ENCODE measurements at regions of chr6 and their contacts with region 1.

Region 1: DNA sequence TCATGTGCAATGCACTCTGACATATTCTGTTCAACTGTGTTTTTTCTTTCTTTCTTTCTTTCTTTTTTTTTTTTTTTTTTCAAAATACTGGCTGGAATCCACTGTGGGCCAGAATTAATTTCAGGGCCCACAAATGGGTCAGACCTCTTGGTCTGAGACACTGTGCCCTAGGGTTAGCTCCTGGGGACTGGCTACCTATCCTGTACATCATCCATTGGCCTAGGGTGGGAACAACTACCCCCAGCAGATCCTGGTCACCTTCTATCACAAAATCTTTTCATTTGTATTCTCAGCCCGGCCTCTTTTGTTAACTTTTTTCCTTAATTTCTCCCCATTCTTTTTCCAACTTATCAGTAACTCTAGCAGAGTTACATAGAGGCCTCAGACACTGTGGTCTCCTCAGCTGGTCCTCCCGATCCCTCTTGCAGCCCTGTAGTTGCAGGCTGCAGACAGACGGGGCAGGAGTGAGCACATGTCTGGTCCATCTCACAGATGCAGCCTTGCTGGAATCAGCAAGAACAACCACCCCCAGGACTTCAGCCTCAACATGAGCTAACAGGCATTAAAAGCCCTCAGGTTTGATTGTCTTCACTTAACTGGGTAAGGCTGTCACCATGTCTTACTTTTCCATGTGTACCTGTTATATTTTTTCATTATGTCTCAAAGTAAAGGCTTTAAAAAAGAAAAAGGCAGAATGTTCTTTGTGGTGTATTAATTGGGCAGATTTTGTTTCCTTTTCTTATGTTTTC is 41.3 kb downstream of the TXLNB start:
- DNase-seq: no peak
- H3K4me3 ChIP-seq: no peak overlapping the region
- CTCF ChIP-seq: peak; percentile 72

Region 2: GRCh38 chr6:139240161-139241010 is 10.1 kb before region 1 on chr6:
- CTCF ChIA-PET with region 1: interaction called, 23 read pairs
- POLR2A ChIA-PET with region 1: no interaction called
- DNase-seq: peak; percentile 78
- H3K4me3 ChIP-seq: no peak overlapping the region
- CTCF ChIP-seq: no peak

Region 3: DNA sequence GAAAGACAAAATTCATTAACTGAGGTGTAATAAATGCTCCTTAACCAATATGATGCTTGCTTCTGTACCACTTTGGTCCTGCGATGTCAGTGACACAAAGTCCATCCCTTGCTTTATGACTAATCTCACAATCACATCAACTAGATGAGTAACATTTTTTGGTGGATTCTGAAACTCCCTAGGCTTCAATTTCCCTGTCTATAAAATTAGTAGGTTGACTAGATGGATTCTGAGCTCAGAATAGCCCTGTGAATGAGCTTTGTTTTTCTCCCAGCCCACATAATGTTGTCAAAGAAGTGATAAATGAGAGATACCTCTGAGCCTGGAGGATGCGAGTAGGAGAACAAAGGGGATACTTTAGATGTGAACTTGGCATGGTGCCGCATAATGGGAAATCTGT is 32.2 kb after region 1 on chr6:
- CTCF ChIA-PET with region 1: no interaction called
- POLR2A ChIA-PET with region 1: no interaction called
- DNase-seq: no peak
- H3K4me3 ChIP-seq: no peak overlapping the region
- CTCF ChIP-seq: no peak